ENCODE measurements at regions of chr22 and their contacts with region 1.

Region 1: DNA sequence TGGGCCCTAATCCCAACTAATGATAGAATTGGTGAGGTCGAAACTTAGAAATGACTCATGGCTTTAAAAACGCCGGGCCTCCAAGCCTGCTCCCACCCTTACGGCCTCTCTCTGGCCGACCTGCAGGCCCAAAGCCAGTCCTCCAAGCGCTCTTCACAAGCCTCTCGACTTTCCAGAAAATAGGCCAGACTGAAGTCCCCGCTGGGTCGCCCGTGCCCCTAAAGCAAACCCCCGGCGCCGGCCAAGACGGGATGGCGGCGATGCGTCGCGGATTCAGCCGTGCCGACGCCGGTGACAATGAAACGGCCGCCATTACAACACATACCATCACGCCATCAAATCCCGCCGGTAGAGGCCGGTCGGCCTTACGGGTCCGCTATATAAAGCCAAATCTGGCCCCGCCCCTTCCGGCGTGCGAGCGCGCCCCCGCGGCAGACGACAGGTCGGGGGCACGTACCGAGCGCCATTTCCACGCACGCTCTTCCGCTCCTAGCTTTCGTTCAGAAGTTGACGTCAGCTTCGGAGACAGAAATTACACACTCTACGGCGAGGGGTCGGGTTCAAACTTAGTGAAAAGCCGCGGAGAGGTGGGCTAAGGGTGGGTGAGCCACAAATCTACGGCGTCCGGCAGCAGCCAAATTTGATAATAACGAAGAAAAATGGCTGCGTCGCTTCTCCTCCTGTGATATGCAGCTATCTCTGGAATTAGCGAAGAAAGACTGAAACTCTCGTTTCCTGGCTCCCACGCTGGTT is at the start of gene RPL3:
- DNase-seq: peak; percentile 97
- ATAC-seq: peak; percentile 83
- H3K4me3 Mint-ChIP-seq: peak within 1 kb of the TSS; percentile 100
- H3K27ac Mint-ChIP-seq: peak within 1 kb of the TSS; percentile 99
- H3K4me1 Mint-ChIP-seq: peaks cover 46% of the 10 kb centered on the region
- H3K27me3 Mint-ChIP-seq: no peaks in the 10 kb centered on the region
- total RNA-seq, gene RPL3: 1,693 to 1,717 TPM

Region 2: DNA sequence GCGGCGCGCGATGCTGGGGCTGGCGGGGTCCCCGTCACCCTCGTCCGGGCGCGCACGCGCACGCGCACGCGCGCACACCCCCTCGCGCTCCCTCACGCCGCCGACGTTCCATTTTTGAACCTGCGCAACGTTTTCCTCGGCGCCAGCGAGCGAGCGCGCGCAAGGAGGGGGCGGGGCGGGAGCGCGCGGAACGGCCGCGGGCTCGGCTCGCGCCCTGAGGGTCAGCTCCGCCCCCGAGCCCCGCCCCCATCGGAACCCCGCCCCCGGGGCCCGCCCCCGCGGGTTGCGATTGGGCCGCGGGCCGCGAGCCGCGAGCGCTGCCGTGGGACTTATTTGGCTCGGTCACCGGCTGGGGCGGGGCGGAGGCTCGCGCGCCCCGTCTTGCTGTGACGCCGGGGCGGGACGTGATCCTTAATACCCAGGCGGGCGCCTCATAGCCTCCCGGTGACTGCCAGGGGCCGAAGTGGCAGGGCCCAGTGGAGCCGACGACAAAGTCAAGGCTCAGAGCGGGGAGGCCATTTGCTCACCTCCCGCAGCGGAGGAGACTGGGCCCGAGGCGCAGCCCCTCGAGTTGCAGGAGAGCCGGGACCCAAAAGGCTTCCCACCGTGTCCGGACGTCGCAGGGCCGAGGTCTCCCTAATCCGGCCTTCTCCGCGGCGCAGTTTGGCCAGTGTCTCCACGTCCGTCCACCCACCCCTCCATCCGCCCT is 166.8 kb before region 1 on chr22 and contains the start of gene CBX7:
- CTCF ChIA-PET with region 1: interaction called, 18 read pairs
- POLR2A ChIA-PET with region 1: interaction called, 63 read pairs
- DNase-seq: peak; percentile 93
- ATAC-seq: peak; percentile 94
- H3K4me3 Mint-ChIP-seq: peak within 1 kb of the TSS; percentile 79
- H3K27ac Mint-ChIP-seq: peak within 1 kb of the TSS; percentile 77
- H3K4me1 Mint-ChIP-seq: peaks cover 34% of the 10 kb centered on the region
- H3K27me3 Mint-ChIP-seq: peaks cover 19% of the 10 kb centered on the region
- total RNA-seq, gene CBX7: 8.6 to 8.7 TPM

Region 3: DNA sequence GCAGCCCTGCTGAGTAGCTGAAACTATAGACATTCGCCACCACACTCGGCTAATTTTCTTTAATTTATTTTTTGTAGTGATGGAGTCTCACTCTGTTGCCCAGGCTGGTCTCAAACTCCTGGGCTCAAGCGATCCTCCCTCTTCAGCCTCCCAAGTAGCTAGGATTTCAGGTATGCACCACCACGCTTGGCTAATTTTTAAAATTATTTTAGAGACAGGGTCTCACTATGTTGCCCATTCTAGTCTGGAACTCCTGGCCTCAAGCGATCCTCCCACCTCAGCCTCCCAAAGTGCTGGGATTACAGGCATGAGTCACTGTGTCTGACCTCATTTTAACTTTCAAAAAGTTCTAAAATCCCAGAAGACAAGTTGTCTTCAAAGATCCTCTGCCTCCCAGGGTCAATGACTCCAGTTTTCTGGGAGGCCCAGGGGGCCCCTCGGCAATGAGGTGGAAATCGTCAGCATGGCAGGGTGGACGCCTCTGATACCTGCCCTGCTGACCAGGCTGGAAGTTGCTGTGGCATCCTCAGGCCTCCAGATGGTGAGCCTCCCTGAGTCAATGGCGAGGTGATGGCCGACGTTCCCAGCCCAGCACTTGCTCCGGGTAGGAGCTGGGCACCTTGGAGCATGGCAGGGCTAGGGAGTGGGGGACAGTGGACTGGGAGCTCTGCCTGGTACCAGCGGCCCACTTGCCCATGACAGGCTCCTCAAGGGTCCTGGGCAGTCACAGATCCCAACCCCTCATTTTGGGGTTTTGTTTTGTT is 31.1 kb before region 1 on chr22:
- CTCF ChIA-PET with region 1: no interaction called
- POLR2A ChIA-PET with region 1: no interaction called
- DNase-seq: no peak
- ATAC-seq: no peak
- H3K4me3 Mint-ChIP-seq: no peak overlapping the region
- H3K27ac Mint-ChIP-seq: no peak overlapping the region
- H3K4me1 Mint-ChIP-seq: no peaks in the 10 kb centered on the region
- H3K27me3 Mint-ChIP-seq: peaks cover 3% of the 10 kb centered on the region

Region 4: GRCh38 chr22:39306581-39307361 is 12.7 kb before region 1 on chr22:
- CTCF ChIA-PET with region 1: interaction called, 18 read pairs
- POLR2A ChIA-PET with region 1: interaction called, 7 read pairs
- DNase-seq: peak; percentile 73
- ATAC-seq: peak; percentile 30
- H3K4me3 Mint-ChIP-seq: no peak overlapping the region
- H3K27ac Mint-ChIP-seq: no peak overlapping the region
- H3K4me1 Mint-ChIP-seq: peaks cover 16% of the 10 kb centered on the region
- H3K27me3 Mint-ChIP-seq: no peaks in the 10 kb centered on the region

Region 5: GRCh38 chr22:39395936-39396796 is 76.7 kb after region 1 on chr22:
- CTCF ChIA-PET with region 1: interaction called, 8 read pairs
- POLR2A ChIA-PET with region 1: interaction called, 12 read pairs
- DNase-seq: no peak
- ATAC-seq: no peak
- H3K4me3 Mint-ChIP-seq: no peak overlapping the region
- H3K27ac Mint-ChIP-seq: no peak overlapping the region
- H3K4me1 Mint-ChIP-seq: peaks cover 9% of the 10 kb centered on the region
- H3K27me3 Mint-ChIP-seq: no peaks in the 10 kb centered on the region

Measured in activated CD8-positive, alpha-beta T cell treated with anti-CD3 and anti-CD28 coated beads, Interleukin-2, amount 10 ng/mL, durations not matched to agents 7 days and 5 days (primary cell).